ENCODE measurements at regions of chr22 and their contacts with region 1.

Region 1: DNA sequence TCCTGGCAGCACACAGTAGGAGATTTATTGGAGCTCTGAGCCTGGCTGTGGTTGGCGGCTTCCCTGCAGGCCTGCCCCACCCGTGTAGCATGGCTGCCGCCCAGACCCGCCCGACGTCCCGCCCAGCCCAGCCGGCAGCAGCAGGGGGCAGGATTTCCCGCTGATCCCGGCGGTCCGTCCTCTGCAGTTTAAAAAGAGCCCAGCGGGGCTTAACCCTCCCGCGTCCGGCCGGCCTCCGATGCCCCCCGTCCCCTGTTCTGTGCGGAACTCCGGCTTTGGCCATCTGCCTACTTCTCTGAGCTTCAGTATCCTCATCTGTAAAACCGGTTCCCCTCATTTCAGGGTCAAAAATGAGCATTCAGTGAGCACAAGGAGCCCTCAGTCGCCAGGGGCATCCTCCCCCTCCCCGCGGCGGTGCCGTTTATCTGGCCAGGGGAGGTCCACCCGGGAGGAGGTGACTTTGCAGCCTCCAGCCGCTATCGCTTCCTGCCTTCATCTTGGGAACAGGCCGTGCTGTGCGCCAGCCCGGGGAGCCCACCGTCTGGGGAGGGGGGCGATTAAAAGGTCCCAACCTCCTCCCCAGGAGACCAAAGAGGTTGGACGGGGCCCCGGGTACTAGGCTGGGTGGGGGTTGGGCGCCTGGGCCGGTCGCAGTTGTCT is at the start of gene GAS2L1:
- DNase-seq: peak; percentile 66 to 78
- H3K4me3 ChIP-seq: peak within 1 kb of the TSS; percentile 75
- H3K27ac ChIP-seq: no peak within 1 kb of the TSS
- H3K4me1 ChIP-seq: peaks cover 26% of the 10 kb centered on the region
- H3K27me3 ChIP-seq: no peaks in the 10 kb centered on the region
- CTCF ChIP-seq: peak; percentile 57
- total RNA-seq, gene GAS2L1: 15.2 and 16.6 TPM in 2 replicates

Region 2: DNA sequence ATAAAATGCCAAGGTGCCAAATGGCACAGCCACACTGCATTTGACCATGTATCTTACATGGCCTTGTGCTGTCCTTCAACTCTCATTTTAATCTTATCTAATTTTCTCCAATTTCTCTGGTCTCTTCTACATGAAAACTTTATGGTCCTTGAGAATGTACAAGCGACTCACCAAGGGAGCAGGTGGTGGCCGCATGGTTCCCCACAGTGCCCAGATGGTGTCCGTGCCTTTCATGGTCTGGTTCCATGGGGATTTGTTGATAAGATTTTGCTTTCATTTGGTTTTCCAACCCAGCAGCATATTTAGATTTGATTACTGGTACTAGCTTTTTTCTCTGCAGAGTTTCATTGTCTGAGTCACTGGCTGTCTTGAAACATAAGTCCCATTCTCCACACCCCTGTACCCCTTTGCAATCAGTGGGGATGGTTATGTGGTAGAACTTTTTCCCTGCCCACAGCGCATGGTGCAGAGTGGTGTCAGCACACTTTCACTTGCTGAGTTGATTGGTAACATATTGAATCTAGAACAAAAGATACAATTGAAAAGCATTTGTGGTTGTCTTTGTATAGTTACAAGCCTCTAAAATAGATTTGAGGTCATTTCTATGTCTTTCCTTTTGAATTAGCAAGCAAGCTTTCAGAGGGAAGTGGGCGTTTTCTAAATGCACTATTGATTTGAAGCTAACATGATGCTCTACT is 398.8 kb before region 1 on chr22:
- CTCF ChIA-PET with region 1: no interaction called
- POLR2A ChIA-PET with region 1: no interaction called
- intact Hi-C with region 1: no loop called
- DNase-seq: no peak
- H3K4me3 ChIP-seq: no peak overlapping the region
- H3K27ac ChIP-seq: no peak overlapping the region
- H3K4me1 ChIP-seq: peaks cover 14% of the 10 kb centered on the region
- H3K27me3 ChIP-seq: no peaks in the 10 kb centered on the region
- CTCF ChIP-seq: no peak

Region 3: GRCh38 chr22:29245637-29246385 is 60.5 kb before region 1 on chr22:
- CTCF ChIA-PET with region 1: no interaction called
- POLR2A ChIA-PET with region 1: no interaction called
- intact Hi-C with region 1: no loop called
- DNase-seq: peak in 1 of 2 experiments; percentile 52
- H3K4me3 ChIP-seq: no peak overlapping the region
- H3K27ac ChIP-seq: no peak overlapping the region
- H3K4me1 ChIP-seq: no peaks in the 10 kb centered on the region
- H3K27me3 ChIP-seq: 0 out of 2 replicates have a peak, but pooled peaks cover 4% of the 10 kb centered on the region
- CTCF ChIP-seq: peak; percentile 97

Region 4: GRCh38 chr22:29266564-29267461 is 39.5 kb before region 1 on chr22:
- CTCF ChIA-PET with region 1: interaction called, 10 read pairs
- POLR2A ChIA-PET with region 1: no interaction called
- intact Hi-C with region 1: no loop called
- DNase-seq: no peak
- H3K4me3 ChIP-seq: peak overlapping the region; percentile 88
- H3K27ac ChIP-seq: peak overlapping the region; percentile 94
- H3K4me1 ChIP-seq: peaks cover 32% of the 10 kb centered on the region
- H3K27me3 ChIP-seq: no peaks in the 10 kb centered on the region
- CTCF ChIP-seq: no peak

Region 5: GRCh38 chr22:29344137-29344536 is 37.8 kb after region 1 on chr22:
- CTCF ChIA-PET with region 1: no interaction called
- POLR2A ChIA-PET with region 1: interaction called, 3 read pairs
- intact Hi-C with region 1: loop called (anchors 1 kb)
- DNase-seq: peak; percentile 92 to 93
- H3K4me3 ChIP-seq: no peak overlapping the region
- H3K27ac ChIP-seq: no peak overlapping the region
- H3K4me1 ChIP-seq: peaks cover 41% of the 10 kb centered on the region
- H3K27me3 ChIP-seq: no peaks in the 10 kb centered on the region
- CTCF ChIP-seq: no peak

Region 6: DNA sequence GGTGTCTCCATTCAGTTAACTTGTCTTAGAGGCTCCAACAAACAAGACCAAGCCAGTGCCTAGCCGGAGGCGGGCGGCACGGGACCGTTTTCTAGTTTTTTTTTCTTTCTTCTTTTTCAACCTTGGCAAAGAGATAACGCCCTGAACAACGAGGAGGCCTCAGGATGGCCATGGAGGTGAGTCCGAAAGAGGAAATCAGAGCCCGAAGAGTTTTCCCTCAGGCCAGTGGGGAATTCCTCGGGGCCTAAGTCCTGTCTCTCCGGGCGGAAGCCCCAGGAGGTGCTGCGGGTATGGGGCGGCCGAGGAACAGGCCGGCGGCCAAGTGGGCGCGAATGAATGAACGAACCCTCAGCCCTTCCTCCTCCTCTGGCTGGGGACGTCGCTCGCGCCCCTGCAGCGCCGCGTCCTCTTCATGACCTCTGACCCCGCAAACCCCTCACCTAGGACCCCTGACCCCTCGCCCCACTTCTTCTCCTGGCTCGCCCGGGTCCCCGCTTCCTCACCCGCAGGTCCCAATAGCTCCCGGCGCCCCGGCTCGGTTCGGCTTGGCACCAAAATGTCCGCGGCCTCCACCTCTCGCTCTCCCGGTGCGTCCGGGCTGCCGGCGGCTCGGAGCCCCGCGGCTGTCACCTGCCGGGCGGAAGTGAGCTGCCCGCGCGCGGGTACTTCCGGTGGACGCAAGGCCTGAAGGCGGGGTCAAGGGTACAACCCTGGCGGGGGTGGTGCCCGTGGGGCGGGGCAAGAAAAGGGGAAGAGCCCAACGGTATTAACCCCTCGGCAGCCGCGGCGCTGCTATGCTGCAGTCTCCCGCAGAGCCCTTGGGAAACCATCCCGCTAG is 81.8 kb after region 1 on chr22 and contains the start of gene AP1B1:
- CTCF ChIA-PET with region 1: no interaction called
- POLR2A ChIA-PET with region 1: no interaction called
- intact Hi-C with region 1: loop called (anchors 10 kb)
- DNase-seq: peak; percentile 88 to 90
- H3K4me3 ChIP-seq: peak within 1 kb of the TSS; percentile 76
- H3K27ac ChIP-seq: 0 out of 2 replicates have a peak within 1 kb of the TSS, but pooled peaks have one; percentile 8
- H3K4me1 ChIP-seq: peaks cover 17% of the 10 kb centered on the region; the same call in 1 of the 2 replicates
- H3K27me3 ChIP-seq: no peaks in the 10 kb centered on the region
- CTCF ChIP-seq: no peak
- total RNA-seq, gene AP1B1: 43.9 and 50.8 TPM in 2 replicates

Measured in PC-9 (cell line).